Mammary epithelial cell (primary cell): ENCODE measurements at regions of chr10 and their contacts with region 1.

Region 1: GRCh38 chr10:102132563-102133372 is at the start of gene PPRC1:
- DNase-seq: peak; percentile 98
- H3K4me3 ChIP-seq: peak within 1 kb of the TSS; percentile 78 to 97 (median 89)
- H3K27ac ChIP-seq: peak within 1 kb of the TSS; percentile 80
- H3K4me1 ChIP-seq: peaks cover 40% of the 10 kb centered on the region
- H3K27me3 ChIP-seq: no peaks in the 10 kb centered on the region
- CTCF ChIP-seq: peak; percentile 76 to 90
- total RNA-seq, gene PPRC1: 14.5 to 69.0 TPM

Region 2: DNA sequence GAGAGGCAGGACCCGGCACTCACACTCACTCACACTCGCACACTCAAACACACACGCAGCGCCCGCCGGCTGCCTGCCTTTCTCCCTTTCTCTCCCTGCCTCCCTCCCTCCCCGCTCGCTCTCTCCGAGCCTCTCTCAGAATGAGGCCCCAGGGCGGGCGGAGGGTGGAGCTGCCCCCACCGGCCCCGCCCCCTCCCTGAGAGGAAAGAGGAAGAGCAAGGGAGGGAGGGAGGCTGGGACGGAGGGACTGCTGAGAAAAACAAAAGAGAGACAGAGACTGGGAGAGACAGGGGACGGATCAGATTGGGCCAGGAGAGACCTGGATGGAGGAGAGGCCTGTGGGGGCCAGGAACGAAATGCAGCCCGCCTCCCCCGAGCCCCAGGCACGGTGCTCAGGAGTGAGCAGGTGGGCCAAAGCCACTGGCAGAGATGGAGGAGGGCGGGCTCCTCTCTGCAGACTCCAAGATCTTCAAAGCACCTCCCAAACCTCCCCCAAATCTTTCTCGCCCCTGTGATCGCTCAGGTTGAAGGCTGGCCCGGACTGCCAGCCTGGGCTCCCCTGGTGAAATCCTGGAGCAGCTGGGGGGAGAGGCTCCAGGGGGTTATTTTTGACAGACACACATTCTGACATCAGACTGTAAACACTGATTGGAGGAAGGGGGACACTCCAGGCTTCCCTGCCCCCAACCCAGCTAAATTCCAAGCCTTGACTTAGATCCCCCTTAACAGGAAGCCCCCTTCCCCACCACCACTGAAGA is 17.7 kb before region 1 on chr10:
- CTCF ChIA-PET with region 1: no interaction called
- dilution Hi-C with region 1: no loop called
- in situ Hi-C with region 1: no loop called
- intact Hi-C with region 1: loop called (anchors 1 kb)
- DNase-seq: peak; percentile 85
- H3K4me3 ChIP-seq: peak overlapping the region; percentile 28 to 92 (median 62)
- H3K27ac ChIP-seq: no peak overlapping the region
- H3K4me1 ChIP-seq: peaks cover 55% of the 10 kb centered on the region
- H3K27me3 ChIP-seq: no peaks in the 10 kb centered on the region
- CTCF ChIP-seq: no peak

Region 3: DNA sequence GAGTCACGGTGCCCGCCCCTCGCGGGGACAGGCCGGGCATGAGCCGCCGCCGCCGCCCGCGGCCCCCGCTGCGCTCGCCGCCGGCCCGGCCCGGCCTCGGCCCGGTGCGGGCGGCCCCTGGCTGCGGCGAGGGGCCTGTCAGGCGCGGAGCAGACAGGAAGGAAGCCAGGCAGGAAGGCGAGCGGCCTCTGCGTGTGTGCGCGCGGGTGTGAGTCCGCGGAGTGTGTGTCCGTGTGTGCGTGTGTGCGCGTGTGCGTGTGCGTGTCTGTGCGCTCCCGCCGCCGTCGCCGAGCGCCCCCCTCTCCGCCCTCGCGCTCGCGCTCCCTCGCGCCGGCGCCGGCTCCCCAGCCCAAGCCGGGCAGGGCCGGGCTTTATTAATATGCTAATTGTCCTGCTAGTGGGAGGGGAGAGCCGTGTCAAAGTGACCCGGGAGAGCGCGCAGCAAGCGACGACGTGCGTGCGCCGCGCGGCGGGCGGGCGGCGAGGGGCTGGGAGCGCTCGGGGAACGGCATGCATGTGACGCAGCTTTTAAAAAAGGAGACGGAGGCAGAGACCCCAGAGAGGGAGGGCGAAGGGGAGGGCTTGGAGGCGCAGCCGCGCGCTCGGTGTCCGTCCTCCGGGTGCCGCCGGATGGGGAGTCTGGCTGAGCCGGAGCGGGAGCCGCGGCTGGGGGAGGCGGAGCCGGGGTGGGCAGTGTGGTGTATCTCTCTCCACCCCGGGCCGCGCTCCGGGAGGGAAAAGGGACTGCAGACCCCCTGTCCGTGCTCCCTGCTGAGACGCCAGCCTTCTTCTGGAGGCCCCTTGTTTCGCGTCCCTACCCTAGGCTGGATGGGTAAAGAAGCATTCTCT is 12.4 kb before region 1 on chr10 and contains the start of gene LDB1:
- CTCF ChIA-PET with region 1: no interaction called
- dilution Hi-C with region 1: no loop called
- in situ Hi-C with region 1: no loop called
- intact Hi-C with region 1: loop called (anchors 1 kb)
- DNase-seq: peak; percentile 77
- H3K4me3 ChIP-seq: peak within 1 kb of the TSS; percentile 79 to 90 (median 81)
- H3K27ac ChIP-seq: peak within 1 kb of the TSS; percentile 18
- H3K4me1 ChIP-seq: peaks cover 41% of the 10 kb centered on the region
- H3K27me3 ChIP-seq: no peaks in the 10 kb centered on the region
- CTCF ChIP-seq: peak in 1 of 2 donors; percentile 25
- total RNA-seq, gene LDB1: 54.3 to 77.1 TPM

Region 4: GRCh38 chr10:102151774-102152544 is 19.2 kb after region 1 on chr10 and contains the start of gene NOLC1:
- CTCF ChIA-PET with region 1: no interaction called
- dilution Hi-C with region 1: no loop called
- in situ Hi-C with region 1: no loop called
- intact Hi-C with region 1: loop called (anchors 1 kb)
- DNase-seq: peak; percentile 99
- H3K4me3 ChIP-seq: peak within 1 kb of the TSS; percentile 82 to 96 (median 89)
- H3K27ac ChIP-seq: peak within 1 kb of the TSS; percentile 95
- H3K4me1 ChIP-seq: peaks cover 13% of the 10 kb centered on the region
- H3K27me3 ChIP-seq: no peaks in the 10 kb centered on the region
- CTCF ChIP-seq: no peak
- total RNA-seq, gene NOLC1: 51.2 to 116 TPM